CD4-positive, alpha-beta T cell (primary cell): ENCODE measurements at regions of chr11 and their contacts with region 1.

Region 1: DNA sequence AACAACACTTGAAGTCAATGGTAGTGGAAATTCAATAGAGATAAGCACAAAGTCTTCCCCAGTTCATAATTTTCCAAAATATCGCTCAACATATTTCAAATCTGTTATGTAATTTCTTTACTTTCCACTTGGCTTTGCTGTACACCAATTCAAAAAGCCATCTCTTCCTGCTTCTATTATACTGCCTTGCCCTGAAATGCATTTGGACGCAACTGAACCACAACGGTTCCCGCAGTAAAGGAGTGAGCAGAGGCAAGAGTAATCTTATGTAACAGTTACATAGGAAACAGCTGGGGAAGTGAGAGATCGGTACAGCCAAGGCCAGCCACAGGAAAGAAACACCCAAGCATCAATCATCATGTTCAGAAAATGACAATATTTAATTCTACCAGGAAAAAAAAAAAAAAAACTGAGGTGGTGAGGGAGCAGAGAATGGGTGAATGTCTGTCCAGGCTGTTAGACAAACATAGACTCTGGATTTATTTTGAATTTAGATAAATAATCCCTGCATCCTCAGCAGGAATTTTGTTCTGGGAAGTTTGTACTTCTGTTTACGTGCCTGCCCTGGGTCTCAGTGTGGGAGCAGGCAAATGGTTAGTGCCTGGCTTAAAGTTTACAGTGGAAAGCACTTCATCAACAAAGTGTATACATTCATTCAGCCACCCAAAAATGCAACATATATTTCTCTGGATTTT is 392.2 kb downstream of the ETS1 start:
- DNase-seq: peak in 13 of 14 experiments; percentile 9 to 86 (median 39)
- ATAC-seq: peak; percentile 98
- H3K4me3 ChIP-seq: no peak overlapping the region
- H3K4me3 Mint-ChIP-seq: peak overlapping the region; percentile 47
- H3K27ac ChIP-seq: peak overlapping the region in 1 of 2 donors; percentile 33
- H3K27ac Mint-ChIP-seq: peak overlapping the region; percentile 60
- H3K4me1 ChIP-seq: peaks cover 9% of the 10 kb centered on the region
- H3K4me1 Mint-ChIP-seq: peaks cover 35% of the 10 kb centered on the region
- H3K27me3 ChIP-seq: no peaks in the 10 kb centered on the region
- H3K27me3 Mint-ChIP-seq: no peaks in the 10 kb centered on the region
- CTCF ChIP-seq: peak; percentile 58

Region 2: GRCh38 chr11:128125723-128126122 is 69.5 kb before region 1 on chr11:
- CTCF ChIA-PET with region 1: no interaction called
- POLR2A ChIA-PET with region 1: no interaction called
- intact Hi-C with region 1: no loop called
- DNase-seq: no peak
- ATAC-seq: no peak
- H3K4me3 ChIP-seq: no peak overlapping the region
- H3K4me3 Mint-ChIP-seq: no peak overlapping the region
- H3K27ac ChIP-seq: no peak overlapping the region
- H3K27ac Mint-ChIP-seq: no peak overlapping the region
- H3K4me1 ChIP-seq: no peaks in the 10 kb centered on the region
- H3K4me1 Mint-ChIP-seq: peaks cover 8% of the 10 kb centered on the region
- H3K27me3 ChIP-seq: no peaks in the 10 kb centered on the region
- H3K27me3 Mint-ChIP-seq: no peaks in the 10 kb centered on the region
- CTCF ChIP-seq: no peak

Region 3: DNA sequence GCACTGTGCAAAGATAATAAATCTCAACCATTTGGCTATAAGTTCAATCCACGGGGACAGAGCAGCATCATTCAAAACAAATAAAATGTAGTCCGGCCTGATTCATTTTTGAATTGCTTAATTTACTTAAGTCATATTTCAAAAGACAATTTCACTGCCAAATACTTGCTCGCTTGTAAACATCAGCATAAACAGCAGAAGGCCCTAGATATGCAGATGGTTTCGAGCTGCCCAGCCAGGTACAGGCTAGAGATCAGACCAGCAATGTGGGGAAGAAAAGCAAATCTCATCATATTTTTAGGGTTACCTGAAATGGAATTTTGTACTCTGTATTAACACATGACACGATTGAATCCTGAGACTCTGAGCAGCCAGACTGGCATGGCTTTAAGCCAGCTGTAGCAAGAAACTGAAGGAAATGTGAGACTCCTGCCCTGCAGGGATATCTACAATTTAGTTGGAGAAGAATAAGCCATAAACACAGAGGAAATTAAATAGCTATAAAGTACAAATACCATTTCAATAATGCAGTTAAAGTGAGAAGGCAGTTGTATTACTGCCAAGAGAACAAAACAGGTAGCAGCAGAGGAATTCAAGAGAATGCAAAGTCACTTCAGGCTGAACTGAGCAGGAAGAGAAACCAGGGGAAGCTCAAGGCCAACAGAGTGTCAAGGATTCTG is 48.1 kb before region 1 on chr11:
- CTCF ChIA-PET with region 1: no interaction called
- POLR2A ChIA-PET with region 1: no interaction called
- intact Hi-C with region 1: no loop called
- DNase-seq: no peak
- ATAC-seq: no peak
- H3K4me3 ChIP-seq: no peak overlapping the region
- H3K4me3 Mint-ChIP-seq: no peak overlapping the region
- H3K27ac ChIP-seq: no peak overlapping the region
- H3K27ac Mint-ChIP-seq: no peak overlapping the region
- H3K4me1 ChIP-seq: no peaks in the 10 kb centered on the region
- H3K4me1 Mint-ChIP-seq: no peaks in the 10 kb centered on the region
- H3K27me3 ChIP-seq: no peaks in the 10 kb centered on the region
- H3K27me3 Mint-ChIP-seq: no peaks in the 10 kb centered on the region
- CTCF ChIP-seq: no peak

Region 4: GRCh38 chr11:128246364-128246801 is 51.2 kb after region 1 on chr11:
- CTCF ChIA-PET with region 1: no interaction called
- POLR2A ChIA-PET with region 1: no interaction called
- intact Hi-C with region 1: no loop called
- DNase-seq: no peak
- ATAC-seq: no peak
- H3K4me3 ChIP-seq: no peak overlapping the region
- H3K4me3 Mint-ChIP-seq: no peak overlapping the region
- H3K27ac ChIP-seq: no peak overlapping the region
- H3K27ac Mint-ChIP-seq: no peak overlapping the region
- H3K4me1 ChIP-seq: no peaks in the 10 kb centered on the region
- H3K4me1 Mint-ChIP-seq: no peaks in the 10 kb centered on the region
- H3K27me3 ChIP-seq: no peaks in the 10 kb centered on the region
- H3K27me3 Mint-ChIP-seq: no peaks in the 10 kb centered on the region
- CTCF ChIP-seq: no peak

Region 5: GRCh38 chr11:128271401-128271800 is 76.2 kb after region 1 on chr11:
- CTCF ChIA-PET with region 1: no interaction called
- POLR2A ChIA-PET with region 1: interaction called, 3 read pairs
- intact Hi-C with region 1: loop called (anchors 5 kb)
- DNase-seq: peak in 3 of 14 experiments; percentile 61 to 81 (median 64)
- ATAC-seq: peak; percentile 65
- H3K4me3 ChIP-seq: no peak overlapping the region
- H3K4me3 Mint-ChIP-seq: peak overlapping the region; percentile 3
- H3K27ac ChIP-seq: peak overlapping the region in 1 of 2 donors; percentile 51
- H3K27ac Mint-ChIP-seq: peak overlapping the region; percentile 85
- H3K4me1 ChIP-seq: peaks cover 8% of the 10 kb centered on the region
- H3K4me1 Mint-ChIP-seq: peaks cover 35% of the 10 kb centered on the region
- H3K27me3 ChIP-seq: no peaks in the 10 kb centered on the region
- H3K27me3 Mint-ChIP-seq: no peaks in the 10 kb centered on the region
- CTCF ChIP-seq: no peak

Region 6: DNA sequence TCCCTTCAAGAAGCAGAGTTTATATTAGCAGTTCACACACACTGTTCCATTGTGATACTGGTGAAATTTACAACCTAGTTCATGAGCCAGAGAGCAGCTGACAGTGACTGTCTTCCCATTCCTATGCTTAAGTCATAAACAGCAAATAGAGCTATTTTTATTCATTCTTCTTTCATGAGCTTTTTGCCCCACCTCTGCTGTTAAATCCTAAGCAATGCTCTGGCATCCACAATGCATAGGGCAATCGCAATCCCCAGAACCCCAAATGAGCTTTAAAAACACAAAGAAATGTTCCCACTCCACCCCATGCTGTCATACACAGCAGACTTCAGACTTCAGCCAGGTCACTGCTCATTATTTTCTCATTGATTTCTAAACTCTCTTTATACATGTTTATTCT is 84.7 kb after region 1 on chr11:
- CTCF ChIA-PET with region 1: interaction called, 4 read pairs
- POLR2A ChIA-PET with region 1: no interaction called
- intact Hi-C with region 1: loop called in 1 of 2 experiments (anchors 5 kb)
- DNase-seq: no peak
- ATAC-seq: no peak
- H3K4me3 ChIP-seq: no peak overlapping the region
- H3K4me3 Mint-ChIP-seq: no peak overlapping the region
- H3K27ac ChIP-seq: no peak overlapping the region
- H3K27ac Mint-ChIP-seq: no peak overlapping the region
- H3K4me1 ChIP-seq: peaks cover 4% of the 10 kb centered on the region
- H3K4me1 Mint-ChIP-seq: peaks cover 5% of the 10 kb centered on the region
- H3K27me3 ChIP-seq: no peaks in the 10 kb centered on the region
- H3K27me3 Mint-ChIP-seq: no peaks in the 10 kb centered on the region
- CTCF ChIP-seq: no peak